ENCODE measurements at regions of chr17 and their contacts with region 1.

Region 1: DNA sequence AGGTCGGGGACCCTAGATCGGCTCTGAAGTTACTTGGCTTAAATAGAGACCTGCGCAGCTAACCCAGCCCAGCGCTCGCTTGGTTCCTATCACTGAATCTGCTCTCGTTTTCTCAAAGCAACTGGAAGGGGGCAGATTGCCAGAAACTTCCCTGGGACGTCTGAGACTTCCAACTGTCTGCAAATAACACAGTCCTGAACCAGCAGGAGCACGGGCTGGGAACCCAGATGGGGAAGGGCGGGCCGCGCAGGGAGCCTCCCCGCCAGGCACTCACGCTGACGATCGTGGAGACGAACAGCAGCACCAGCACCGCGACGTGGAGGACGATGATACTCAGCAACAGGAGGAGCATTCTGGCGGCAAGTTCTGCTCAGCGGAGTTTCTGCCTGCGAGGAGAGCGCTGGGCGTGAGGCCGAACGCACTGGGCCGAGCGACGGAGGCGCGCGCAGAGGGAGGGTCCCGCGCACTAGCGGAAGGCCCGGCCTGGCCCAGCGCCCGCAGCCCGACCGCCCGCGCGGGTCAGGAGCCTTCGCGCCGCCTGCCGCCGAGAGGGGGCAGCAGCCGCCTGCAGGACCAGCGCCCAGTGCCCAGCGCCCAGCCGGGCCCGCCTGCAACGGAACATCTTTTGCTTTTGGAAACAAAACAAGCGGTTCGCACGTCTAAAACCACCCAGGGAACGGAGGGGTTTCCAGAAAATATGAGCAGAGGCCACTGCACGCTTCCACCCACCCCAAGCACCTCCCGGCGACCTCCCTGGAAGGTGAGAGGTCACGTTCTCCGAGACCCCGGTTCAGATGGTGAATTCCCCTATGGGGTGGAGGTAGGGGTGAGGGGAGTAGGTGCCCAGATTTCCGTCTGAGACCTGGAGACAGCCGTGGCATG is 4.5 kb downstream of the PMP22 start:
- DNase-seq: peak; percentile 92
- ATAC-seq: peak; percentile 65

Region 2: DNA sequence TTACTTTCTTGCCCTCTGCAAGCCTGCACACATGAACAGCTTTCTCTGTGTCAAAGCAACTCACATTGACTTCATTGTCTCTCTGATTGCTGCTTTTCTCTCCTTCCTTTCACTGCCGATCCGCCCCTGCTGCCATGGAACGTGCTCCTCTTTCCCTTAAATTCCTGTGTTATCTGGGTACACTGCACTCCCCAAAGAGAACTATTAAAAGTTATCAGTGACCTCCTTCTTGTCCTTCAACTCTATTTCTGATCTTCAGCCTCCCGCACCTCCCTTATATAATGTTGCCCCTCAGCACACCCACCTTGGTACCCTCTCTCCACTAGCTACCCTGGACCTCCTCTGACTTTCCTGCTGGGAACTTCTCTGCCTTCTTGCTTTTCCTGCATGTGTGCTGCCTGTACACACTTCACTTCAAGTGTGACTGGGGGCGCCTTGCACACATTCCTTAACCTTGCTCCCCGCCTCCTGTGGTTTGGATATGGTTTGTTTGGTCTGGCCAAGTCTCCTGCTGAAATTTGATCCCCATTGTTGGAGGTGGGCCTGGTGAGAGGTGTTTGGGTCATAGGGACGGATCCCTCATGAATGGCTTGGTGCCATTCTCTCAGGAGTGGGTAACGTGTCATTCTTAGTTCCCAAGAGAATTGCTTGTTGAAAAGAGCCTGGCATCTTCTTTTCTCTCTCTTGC is 31.2 kb after region 1 on chr17:
- intact Hi-C with region 1: loop called (anchors 1 kb)
- DNase-seq: no peak
- ATAC-seq: peak; percentile 71

Region 3: DNA sequence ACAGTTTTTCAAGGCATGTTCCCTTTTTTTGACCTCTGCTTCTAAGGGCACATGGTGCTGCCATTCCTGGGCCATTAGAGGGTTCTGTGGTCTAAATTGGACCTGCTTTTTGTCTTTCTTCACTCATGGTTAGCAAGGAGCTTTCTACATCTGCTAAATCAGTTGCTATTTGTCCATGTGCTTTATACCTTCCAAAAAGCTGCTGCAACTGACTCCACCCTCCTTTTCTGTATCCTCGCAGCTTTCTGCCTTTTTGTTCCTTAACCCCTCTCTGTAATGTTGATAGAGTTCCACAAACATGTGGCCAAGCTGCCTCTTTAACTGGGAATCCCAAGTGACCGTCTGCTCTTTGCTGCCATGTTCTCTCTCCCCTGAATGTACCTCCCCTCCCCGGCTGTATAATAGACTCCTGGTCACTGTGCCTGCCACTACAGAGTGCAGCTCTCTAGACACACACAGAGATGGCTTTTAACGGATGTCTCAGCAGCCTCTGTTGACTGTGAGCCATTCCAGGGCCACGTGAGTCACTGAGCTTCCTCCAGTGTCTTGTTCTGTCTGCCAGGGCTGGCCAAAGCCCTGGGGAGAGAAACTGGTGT is 138.2 kb after region 1 on chr17:
- intact Hi-C with region 1: loop called (anchors 5 kb)
- DNase-seq: no peak
- ATAC-seq: peak; percentile 63

Region 4: DNA sequence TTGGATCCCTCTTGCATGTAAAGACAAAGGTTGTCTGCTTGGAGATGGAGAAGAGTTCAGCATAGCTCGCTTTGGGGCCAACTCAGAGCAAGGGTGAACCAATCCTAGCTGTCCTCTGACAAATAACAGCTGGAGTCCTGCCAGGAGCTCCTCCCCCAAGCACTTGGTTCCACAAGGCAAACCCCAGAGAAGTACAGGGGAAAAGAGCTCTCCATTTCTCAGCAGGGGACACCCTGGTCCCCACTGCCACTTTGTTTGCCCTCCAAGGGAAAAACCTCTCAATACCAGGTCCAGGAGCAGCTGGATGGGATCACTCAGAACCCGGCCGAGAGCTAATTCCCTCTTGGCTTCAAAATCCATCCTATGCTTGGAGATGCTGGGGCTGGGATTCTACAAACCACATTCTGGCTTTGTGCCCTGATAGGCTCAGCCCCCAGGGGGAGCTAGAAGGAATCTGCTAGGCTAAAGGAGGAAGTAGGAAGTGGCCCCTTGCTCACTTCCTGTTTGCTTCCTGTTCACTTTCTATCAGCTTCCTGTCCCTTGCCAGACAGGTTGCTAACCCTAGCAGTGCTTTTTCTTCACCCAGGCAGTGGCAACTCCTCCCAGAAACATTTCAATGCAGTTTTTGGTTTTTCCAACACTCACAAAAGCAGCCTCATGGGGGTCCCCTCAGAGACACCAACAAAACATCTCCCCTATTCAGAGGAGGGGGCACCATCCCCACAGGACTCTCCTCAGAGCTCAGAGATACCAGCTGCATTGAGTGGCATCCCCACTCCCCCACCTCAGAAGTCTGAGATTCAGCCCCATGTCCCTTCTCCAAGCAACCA is 176.1 kb after region 1 on chr17:
- intact Hi-C with region 1: loop called (anchors 5 kb)
- DNase-seq: peak; percentile 78
- ATAC-seq: peak; percentile 66

Region 5: GRCh38 chr17:15502369-15503112 is 241.9 kb after region 1 on chr17:
- intact Hi-C with region 1: loop called (anchors 1 kb)
- DNase-seq: peak; percentile 96
- ATAC-seq: peak; percentile 95